ENCODE measurements at regions of chr4 and their contacts with region 1.

Region 1: DNA sequence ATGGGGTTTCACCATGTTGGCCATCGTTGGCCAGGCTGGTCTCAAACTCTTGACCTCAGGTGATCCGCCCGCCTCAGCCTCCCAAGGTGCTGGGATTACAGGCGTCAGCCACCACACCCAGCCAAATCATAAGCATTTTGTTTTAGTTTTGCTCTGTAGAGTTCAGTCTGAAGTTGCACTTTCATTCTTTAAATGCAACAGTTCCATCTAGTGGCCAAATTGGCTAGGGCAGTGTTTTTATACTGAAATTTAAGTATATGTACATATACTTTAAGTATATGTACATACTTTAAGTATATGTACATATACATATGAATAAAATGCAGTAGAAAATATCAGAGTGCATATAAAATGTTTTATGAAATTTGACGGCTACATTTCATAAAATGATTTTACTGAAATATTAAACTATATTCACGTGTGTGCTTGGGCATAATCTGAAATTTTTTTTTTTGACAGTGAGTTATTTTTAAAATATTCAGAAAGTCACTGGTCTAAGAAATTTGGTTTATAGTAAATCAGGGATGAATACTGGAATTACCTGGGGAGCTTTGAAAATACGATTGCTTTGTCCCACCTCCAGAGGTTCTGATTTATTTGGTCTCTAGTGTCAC is 145.5 kb downstream of the NWD2 start:
- DNase-seq: peak; percentile 56
- H3K4me3 Mint-ChIP-seq: no peak overlapping the region
- H3K27ac Mint-ChIP-seq: no peak overlapping the region
- H3K4me1 Mint-ChIP-seq: no peaks in the 10 kb centered on the region
- H3K27me3 Mint-ChIP-seq: peaks cover 5% of the 10 kb centered on the region

Region 2: GRCh38 chr4:36414248-36414647 is 975.8 kb before region 1 on chr4:
- CTCF ChIA-PET with region 1: no interaction called
- intact Hi-C with region 1: loop called (anchors 1 kb)
- DNase-seq: no peak
- H3K4me3 Mint-ChIP-seq: no peak overlapping the region
- H3K27ac Mint-ChIP-seq: no peak overlapping the region
- H3K4me1 Mint-ChIP-seq: no peaks in the 10 kb centered on the region
- H3K27me3 Mint-ChIP-seq: peaks cover 22% of the 10 kb centered on the region

Region 3: GRCh38 chr4:37068580-37068979 is 321.5 kb before region 1 on chr4:
- CTCF ChIA-PET with region 1: no interaction called
- intact Hi-C with region 1: loop called (anchors 10 kb)
- DNase-seq: no peak
- H3K4me3 Mint-ChIP-seq: no peak overlapping the region
- H3K27ac Mint-ChIP-seq: no peak overlapping the region
- H3K4me1 Mint-ChIP-seq: peaks cover 6% of the 10 kb centered on the region
- H3K27me3 Mint-ChIP-seq: no peaks in the 10 kb centered on the region

Region 4: DNA sequence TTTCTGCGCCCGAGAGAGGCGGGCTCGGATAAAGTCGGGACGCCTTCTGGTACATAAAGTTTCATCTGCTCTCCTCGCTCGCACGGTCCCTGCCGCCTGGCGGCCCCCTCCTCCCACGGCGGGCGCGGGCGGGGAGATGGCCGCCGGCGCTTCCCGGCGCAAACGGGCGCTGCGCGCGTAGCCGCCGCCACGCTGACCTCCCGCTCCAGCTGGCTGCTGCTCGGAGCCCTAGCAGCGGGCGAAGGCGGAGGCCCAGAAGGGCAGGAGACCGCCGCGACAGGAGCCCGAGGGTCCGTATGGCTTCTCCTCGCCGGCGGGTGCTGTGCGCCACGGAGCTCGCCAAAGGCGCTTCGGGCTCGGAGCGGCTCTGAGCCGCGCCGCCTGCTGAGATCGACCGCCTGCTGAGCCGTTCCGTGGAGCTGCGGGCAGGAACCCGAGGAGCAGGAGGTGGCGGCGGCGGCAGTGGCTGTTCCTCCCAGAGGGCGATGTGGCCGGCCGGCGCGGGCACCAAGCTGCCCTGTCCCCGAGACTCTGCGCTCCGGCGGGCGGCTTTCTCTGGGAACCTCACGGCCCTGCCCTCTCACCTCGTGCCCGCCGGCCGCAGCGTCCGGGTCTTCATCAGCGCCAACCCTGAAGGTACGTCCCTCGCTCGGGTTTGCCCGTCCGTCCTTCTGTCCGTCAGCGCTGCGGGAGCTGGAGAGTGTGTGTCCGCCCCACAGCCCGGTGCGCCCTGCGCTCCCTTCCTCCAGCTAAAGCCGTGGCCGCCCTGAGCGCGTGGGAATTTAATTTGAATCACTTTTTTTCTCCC is 145.3 kb before region 1 on chr4 and contains the start of gene NWD2:
- CTCF ChIA-PET with region 1: no interaction called
- intact Hi-C with region 1: loop called (anchors 10 kb)
- DNase-seq: no peak
- H3K4me3 Mint-ChIP-seq: no peak within 1 kb of the TSS
- H3K27ac Mint-ChIP-seq: no peak within 1 kb of the TSS
- H3K4me1 Mint-ChIP-seq: peaks cover 6% of the 10 kb centered on the region
- H3K27me3 Mint-ChIP-seq: peaks cover 47% of the 10 kb centered on the region
- total RNA-seq, gene NWD2: not detected

Region 5: DNA sequence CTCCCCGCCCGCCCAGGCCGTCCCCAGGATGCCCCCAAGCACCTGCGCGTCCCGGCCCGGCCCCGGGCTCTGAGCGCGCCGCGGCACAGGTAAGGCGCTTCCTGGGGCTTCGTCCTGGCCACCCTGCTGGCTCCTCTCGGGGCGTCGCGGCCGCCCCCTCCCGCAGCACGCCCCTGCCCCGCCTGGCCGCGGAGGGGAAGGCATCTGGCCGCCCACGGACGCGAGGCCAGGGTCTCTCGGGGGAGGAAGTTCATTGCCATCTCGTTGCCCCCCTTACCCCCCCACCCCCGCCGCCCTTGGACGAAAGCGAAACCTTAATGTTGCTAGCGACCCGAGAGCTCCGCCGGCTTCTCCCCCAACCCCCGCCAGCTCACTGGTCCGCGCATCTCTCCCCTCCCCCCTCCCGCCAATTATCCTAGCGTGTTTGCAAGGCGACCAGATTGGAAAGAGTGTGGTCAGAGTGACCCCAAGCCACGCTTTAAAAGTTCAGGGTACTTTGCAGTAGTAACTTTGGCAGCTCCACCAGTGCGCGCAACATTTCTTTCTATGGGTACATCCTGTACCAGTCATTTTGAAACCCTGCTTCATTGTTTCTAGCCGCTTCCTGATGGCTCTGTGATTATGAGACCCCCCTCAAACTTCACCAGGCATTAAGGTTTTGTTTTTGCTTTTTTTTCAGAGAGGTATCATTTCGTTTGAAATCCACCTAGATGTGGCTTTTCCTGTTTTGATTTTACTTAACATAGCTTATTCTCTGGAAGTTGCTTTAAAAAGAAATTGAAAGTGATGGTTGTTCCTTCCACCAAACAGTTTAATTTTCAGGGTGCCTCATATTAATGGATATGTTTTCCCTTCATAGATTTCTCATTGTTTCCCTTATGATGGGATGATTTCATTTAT is 501.4 kb after region 1 on chr4:
- CTCF ChIA-PET with region 1: no interaction called
- intact Hi-C with region 1: no loop called
- DNase-seq: peak; percentile 74
- H3K4me3 Mint-ChIP-seq: peak overlapping the region; percentile 89
- H3K27ac Mint-ChIP-seq: peak overlapping the region; percentile 86
- H3K4me1 Mint-ChIP-seq: peaks cover 37% of the 10 kb centered on the region
- H3K27me3 Mint-ChIP-seq: peaks cover 8% of the 10 kb centered on the region

Measured in activated naive CD4-positive, alpha-beta T cell treated with anti-CD3 and anti-CD28 coated beads for 36 hours (primary cell).